Left cardiac atrium (tissue), 4 donors: ENCODE measurements at regions of chr7 and their contacts with region 1.

Region 1: GRCh38 chr7:2680792-2681490 is 7.1 kb upstream of the AMZ1 start:
- DNase-seq: peak; percentile 89
- ATAC-seq: peak; percentile 82 to 84

Region 2: DNA sequence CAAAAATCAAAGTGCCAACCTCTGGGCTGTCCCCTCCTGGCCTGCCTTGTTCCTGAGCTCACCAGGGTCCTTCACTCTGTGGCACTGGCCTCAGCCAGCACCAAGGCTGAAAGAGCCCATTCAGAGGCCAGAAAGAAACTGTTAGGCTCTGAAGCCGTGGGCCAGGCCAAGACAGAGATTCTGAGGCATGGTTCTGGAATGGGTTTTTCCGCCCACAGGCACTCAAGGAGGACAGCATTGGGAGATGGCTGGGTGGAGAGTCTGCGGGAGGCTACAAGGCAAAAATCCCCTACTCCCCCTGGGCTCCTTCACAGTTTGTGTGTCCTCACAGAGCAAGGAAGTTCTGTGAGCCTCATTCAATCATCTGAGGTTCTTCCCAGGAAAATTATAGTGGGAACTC is 236.5 kb before region 1 on chr7:
- intact Hi-C with region 1: loop called in 1 of 2 experiments (anchors 10 kb)
- DNase-seq: peak; percentile 59
- ATAC-seq: peak; percentile 21 to 83

Region 3: DNA sequence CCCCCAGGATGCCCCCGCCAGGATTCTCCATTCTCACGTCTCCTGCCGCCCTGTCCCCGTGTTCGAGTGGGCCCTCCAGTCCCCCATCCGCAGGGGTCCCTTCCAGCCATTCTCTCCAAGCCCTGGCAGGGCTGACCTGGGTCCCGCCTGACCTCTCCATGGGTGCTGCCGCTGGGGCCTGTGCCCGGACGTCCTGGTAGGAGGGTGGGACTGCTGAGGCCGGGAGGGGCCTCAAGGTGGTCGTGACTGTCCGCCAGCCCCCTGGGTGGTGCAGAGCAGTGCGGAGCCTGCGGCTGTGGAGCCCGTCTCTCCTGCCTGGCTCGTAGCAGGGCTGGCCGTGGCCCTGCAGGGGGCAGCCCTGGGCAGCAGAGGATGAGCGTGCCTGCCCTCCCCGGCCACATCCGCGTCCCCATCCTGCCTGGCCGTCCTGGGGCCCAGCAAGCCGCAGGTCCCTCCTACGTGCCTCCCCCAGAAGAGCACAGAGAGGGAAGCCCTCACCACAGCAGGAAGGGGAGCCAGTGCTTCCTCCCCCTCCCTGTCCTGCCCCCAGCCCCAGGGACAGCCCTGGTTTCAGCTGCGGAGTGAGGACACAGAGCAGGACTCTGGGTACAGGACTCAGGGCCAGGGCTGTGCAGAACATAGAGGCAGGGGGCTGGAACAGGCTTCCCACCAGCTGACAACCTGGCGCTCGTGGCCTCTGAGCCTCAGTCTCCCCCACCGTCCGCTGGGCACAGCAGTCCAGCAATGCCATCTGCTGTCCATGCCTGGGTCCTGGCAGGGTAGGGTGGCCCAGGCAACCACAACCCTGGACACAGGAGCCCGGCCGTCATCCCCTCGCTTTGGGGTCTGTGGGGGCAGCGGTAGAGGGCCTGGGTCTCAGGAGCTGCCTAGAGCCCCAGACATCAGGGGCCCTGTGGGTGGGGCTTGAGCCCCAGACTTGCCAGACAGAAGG is 203.2 kb before region 1 on chr7:
- intact Hi-C with region 1: loop called in 1 of 2 experiments (anchors 10 kb)
- DNase-seq: peak; percentile 76
- ATAC-seq: peak; percentile 85 to 88

Region 4: DNA sequence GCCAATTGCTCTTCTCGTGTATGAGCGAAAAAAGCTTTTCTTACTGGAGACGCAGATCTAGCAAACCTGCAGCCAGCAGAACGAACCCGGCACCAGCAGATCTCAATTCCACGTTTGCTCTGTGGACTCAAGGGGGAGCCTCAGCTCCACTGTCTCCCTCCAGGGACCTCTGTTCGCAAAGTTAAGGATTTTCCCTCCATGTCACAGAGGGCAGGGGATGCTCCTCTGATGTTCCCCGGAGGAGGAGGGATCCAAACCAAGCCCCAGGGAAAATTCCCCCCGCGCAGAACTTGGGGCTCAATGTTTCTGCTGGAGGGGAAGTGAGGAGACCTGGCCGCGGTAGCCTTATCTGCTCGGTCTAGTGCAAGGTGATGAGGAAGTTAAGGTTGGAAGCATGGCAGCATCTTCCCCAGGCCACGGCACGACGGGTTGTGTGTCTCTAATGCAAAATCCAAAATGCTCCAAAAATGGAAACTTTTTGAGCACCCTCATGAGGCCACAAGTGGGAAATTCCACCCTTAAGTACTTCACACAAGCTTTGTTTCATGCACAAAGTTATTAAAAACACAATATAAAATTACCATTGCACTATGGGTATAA is 113.2 kb before region 1 on chr7:
- intact Hi-C with region 1: loop called (anchors 1 to 5 kb)
- DNase-seq: peak; percentile 41
- ATAC-seq: peak; percentile 82 to 83

Region 5: GRCh38 chr7:2621061-2621828 is 59.7 kb before region 1 on chr7:
- intact Hi-C with region 1: no loop called
- DNase-seq: peak; percentile 74
- ATAC-seq: peak; percentile 57 to 66

Region 6: GRCh38 chr7:2720582-2721491 is 39.9 kb after region 1 on chr7:
- intact Hi-C with region 1: no loop called
- DNase-seq: no peak
- ATAC-seq: no peak